Heart right ventricle (tissue), 16 donors: ENCODE measurements at regions of chr3 and their contacts with region 1.

Region 1: DNA sequence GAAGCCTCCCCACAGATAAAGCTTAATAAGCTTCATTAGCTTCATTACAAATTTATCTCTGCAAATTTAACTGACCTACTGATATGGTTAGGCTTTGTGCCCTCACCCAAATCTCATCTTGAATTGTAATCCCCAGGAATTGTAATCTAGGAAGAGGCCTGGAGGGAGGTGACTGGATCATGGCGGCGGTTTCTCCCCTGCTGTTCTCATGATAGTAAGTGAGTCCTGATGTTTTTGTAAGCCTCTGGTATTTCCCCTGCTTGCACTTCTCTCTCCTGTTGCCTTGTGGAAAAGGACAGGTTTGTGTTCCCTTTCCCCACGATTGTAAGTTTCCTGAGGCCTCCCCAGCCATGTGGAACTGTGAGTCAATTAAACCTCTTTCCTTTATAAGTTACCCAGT is 226.1 kb upstream of the TTC14 start:
- DNase-seq: no peak
- ATAC-seq: no peak
- H3K4me3 ChIP-seq: no peak overlapping the region
- H3K27ac ChIP-seq: no peak overlapping the region
- H3K4me1 ChIP-seq: no peaks in the 10 kb centered on the region
- H3K27me3 ChIP-seq: no peaks in the 10 kb centered on the region
- CTCF ChIP-seq: no peak

Region 2: GRCh38 chr3:179299999-179300613 is 1075.7 kb before region 1 on chr3:
- intact Hi-C with region 1: loop called in 1 of 10 experiments (anchors 10 kb)
- DNase-seq: no peak
- ATAC-seq: no peak
- H3K4me3 ChIP-seq: no peak overlapping the region
- H3K27ac ChIP-seq: no peak overlapping the region
- H3K4me1 ChIP-seq: no peaks in the 10 kb centered on the region
- H3K27me3 ChIP-seq: no peaks in the 10 kb centered on the region
- CTCF ChIP-seq: no peak